ENCODE measurements at regions of chr4 and their contacts with region 1.

Region 1: DNA sequence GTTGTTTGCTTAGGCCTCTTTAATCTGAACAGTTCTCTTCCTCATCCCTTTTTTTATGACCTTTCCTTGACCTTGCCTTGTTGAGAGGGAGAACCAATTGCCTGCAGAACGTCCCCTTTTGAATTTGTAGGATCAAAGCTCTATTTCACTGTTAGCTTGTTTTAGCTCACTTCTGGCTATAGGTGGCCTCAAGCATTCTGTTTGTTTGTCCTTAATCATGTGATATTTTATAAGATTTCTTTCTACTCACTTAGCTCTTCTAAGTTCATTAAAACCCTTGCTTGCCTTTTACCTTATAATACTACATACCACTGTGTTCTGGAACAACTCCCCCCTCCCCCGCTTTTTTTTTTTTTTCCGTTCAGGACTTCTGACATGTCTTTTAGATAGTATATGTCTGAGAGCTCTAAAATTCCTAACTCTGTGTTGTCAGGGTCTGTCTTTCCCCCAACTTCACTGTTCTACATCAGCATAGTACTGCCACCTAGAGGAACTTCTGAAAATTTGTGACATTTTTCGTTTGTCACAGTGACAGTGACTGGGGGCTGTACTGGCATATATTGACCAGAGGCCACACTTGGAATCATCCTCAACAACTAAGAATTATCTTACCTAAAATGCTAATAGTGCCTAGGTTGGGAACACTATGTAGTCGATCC is 128.5 kb downstream of the LARP7 start:
- DNase-seq: no peak
- H3K4me3 Mint-ChIP-seq: no peak overlapping the region
- H3K27ac Mint-ChIP-seq: no peak overlapping the region
- H3K4me1 Mint-ChIP-seq: no peaks in the 10 kb centered on the region
- H3K27me3 Mint-ChIP-seq: no peaks in the 10 kb centered on the region

Region 2: DNA sequence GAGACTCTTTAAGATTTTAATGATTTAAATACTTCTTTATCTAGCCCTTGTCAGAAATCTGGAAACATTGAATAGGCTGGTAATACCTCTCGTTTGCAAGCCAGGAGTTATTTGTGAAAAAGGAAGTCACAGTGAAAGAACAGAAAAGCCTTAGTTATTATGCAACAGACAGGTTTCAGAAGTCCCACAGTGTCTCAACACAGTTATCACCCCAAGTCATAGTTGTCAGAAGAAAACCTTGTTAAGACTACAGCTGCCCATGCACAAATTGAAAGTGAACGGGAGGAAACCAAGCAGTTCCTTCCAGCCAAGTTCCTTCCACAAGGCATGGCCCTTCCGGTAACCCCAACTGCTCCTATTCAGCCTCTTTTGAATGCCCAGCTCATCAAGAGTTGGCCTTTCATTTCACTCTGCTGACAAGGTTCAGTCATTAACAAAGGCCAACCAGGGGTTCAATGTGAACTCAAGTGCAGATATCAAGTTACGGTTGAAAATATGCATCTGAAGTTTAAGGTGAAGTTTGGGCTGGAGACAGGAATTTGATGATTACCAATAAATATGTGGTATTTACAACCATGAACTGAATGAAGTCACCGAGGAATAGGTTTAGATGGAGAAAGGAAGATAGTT is 452.7 kb before region 1 on chr4:
- intact Hi-C with region 1: no loop called
- DNase-seq: no peak
- H3K4me3 Mint-ChIP-seq: no peak overlapping the region
- H3K27ac Mint-ChIP-seq: no peak overlapping the region
- H3K4me1 Mint-ChIP-seq: no peaks in the 10 kb centered on the region
- H3K27me3 Mint-ChIP-seq: no peaks in the 10 kb centered on the region

Region 3: DNA sequence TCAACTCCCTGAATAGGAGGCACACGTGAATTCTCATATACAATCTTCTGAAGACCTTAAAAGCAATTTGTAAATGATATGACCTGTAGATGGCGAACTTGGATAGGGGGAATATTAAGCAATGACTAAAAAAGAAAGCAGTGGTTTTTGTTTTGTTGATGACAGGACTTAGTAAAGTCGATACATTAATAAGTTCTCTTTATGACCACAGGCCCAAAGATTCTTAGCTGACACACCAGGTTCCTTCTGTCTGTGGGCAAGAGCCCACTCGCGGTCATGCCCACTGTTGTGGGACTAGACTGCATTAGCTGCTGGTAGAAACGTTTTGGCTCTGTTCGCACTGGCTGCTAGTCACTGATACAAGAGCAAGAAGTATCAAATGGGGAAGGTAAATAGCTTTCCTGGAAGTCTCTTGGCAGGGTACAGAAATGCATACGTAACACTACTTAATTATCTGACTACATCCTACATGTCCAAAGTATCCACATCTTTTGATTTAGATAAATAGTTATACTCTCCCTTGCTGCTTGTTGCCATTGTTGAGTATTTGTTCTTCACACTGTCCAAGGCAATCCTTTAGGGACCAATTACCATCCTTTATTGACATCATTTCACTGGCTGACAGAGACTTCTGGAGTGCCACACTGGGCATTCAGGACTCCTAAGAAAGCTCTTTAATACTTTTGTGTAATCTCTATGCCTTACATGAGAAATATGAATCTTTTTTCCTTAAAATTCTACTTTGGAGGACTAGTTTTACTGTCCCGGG is 437.3 kb before region 1 on chr4:
- intact Hi-C with region 1: loop called (anchors 10 kb)
- DNase-seq: no peak
- H3K4me3 Mint-ChIP-seq: no peak overlapping the region
- H3K27ac Mint-ChIP-seq: no peak overlapping the region
- H3K4me1 Mint-ChIP-seq: peaks cover 4% of the 10 kb centered on the region
- H3K27me3 Mint-ChIP-seq: no peaks in the 10 kb centered on the region

Region 4: GRCh38 chr4:112523764-112524505 is 241.5 kb before region 1 on chr4:
- intact Hi-C with region 1: loop called (anchors 10 kb)
- DNase-seq: peak; percentile 68
- H3K4me3 Mint-ChIP-seq: peak overlapping the region; percentile 79
- H3K27ac Mint-ChIP-seq: no peak overlapping the region
- H3K4me1 Mint-ChIP-seq: peaks cover 20% of the 10 kb centered on the region
- H3K27me3 Mint-ChIP-seq: peaks cover 75% of the 10 kb centered on the region

Region 5: GRCh38 chr4:112636688-112637551 is 128.5 kb before region 1 on chr4 and contains the starts of genes LARP7 and ZGRF1:
- intact Hi-C with region 1: loop called (anchors 1 kb)
- DNase-seq: peak; percentile 97
- H3K4me3 Mint-ChIP-seq: no peak within 1 kb of the TSS
- H3K27ac Mint-ChIP-seq: no peak within 1 kb of the TSS
- H3K4me1 Mint-ChIP-seq: peaks cover 29% of the 10 kb centered on the region
- H3K27me3 Mint-ChIP-seq: no peaks in the 10 kb centered on the region
- total RNA-seq, gene LARP7: 44.0 and 45.3 TPM in 2 replicates
- total RNA-seq, gene ZGRF1: 30.0 and 30.4 TPM in 2 replicates

Region 6: GRCh38 chr4:112704991-112705845 is 60.2 kb before region 1 on chr4:
- intact Hi-C with region 1: loop called (anchors 10 kb)
- DNase-seq: no peak
- H3K4me3 Mint-ChIP-seq: peak overlapping the region; percentile 82
- H3K27ac Mint-ChIP-seq: no peak overlapping the region
- H3K4me1 Mint-ChIP-seq: peaks cover 16% of the 10 kb centered on the region
- H3K27me3 Mint-ChIP-seq: peaks cover 55% of the 10 kb centered on the region

Region 7: GRCh38 chr4:112938461-112939058 is 173.1 kb after region 1 on chr4:
- intact Hi-C with region 1: loop called (anchors 2 kb)
- DNase-seq: no peak
- H3K4me3 Mint-ChIP-seq: no peak overlapping the region
- H3K27ac Mint-ChIP-seq: no peak overlapping the region
- H3K4me1 Mint-ChIP-seq: no peaks in the 10 kb centered on the region
- H3K27me3 Mint-ChIP-seq: peaks cover 4% of the 10 kb centered on the region